ENCODE measurements at regions of chr3 and their contacts with region 1.

Region 1: DNA sequence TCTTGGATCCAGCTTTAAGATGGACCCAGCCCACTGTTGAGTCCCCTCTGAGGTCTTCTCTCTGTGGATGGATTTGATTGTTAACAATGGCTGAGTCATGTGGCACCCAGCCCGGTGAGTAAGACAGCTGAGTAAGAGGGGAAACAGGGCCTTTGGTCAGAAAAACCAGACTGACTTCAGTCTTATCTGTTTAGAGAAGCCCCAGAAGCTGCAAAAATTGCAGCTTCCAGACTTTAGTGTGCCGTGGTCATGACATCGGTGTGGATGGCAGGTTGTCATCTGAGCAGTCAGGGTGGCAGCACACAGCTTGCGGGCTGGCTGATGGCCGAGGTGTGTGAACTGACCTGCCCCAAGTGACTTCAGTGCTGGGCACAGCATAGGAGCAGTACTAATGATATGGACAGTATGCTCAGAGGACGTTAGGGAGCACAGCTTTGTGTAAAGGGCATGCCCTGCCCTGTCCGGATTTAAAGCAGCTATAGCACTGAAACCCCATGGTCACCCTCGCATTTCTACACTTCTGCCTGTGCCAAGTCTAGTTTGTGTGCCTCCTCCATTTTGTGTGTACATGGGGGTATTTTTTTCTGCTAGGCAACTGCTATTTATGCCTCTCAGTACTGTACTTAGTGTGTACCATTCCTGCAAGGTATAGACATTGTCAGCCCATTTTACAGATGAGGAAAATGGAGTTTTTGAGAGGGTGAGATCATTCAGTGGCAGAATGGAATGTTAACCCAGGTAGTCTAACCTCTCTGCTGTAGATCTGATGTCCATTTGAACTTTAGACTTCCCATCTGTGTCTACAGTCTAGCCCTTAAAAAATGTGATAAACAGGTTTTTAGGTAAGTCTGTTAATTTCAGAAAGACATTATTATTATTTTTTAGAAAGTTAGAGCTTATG is 44.4 kb downstream of the FLNB start:
- DNase-seq: peak; percentile 97
- H3K4me3 Mint-ChIP-seq: peak overlapping the region; percentile 68
- H3K27ac Mint-ChIP-seq: peak overlapping the region; percentile 95
- H3K4me1 Mint-ChIP-seq: peaks cover 59% of the 10 kb centered on the region
- H3K27me3 Mint-ChIP-seq: no peaks in the 10 kb centered on the region
- CTCF ChIP-seq: no peak

Region 2: DNA sequence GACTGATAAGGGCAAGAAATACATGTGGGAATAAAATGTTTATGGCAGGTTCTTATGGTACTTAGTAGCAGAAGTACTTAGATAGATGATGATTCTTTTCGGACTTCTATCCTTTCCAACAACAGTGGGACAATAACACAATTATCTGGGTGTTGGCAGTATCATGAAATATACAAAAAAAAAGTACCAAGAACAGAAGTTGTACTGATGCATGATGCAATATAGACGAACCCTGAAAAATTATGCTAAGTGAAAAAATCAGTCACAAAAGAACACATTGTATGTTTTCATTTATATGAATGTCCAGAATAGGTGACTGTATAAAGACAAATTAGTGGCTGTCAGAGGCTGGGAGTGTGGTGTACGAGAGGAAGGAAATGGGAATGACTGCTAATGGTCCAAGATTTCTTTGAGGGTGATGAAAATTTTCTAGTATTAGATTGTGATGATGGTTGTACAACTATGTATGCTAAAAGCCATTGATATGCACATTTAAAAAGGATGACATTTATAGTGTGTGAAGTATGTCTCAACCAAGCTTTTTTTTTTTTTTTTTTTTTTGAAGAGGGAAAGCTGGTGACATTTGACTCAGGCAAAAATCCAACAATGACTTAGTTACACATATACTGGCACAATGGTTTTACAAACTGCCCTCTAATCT is 476.5 kb before region 1 on chr3:
- CTCF ChIA-PET with region 1: no interaction called
- POLR2A ChIA-PET with region 1: no interaction called
- intact Hi-C with region 1: no loop called
- DNase-seq: no peak
- H3K4me3 Mint-ChIP-seq: no peak overlapping the region
- H3K27ac Mint-ChIP-seq: peak overlapping the region; percentile 37
- H3K4me1 Mint-ChIP-seq: peaks cover 6% of the 10 kb centered on the region
- H3K27me3 Mint-ChIP-seq: no peaks in the 10 kb centered on the region
- CTCF ChIP-seq: no peak

Region 3: GRCh38 chr3:58013973-58014649 is 38.5 kb before region 1 on chr3:
- CTCF ChIA-PET with region 1: interaction called, 7 read pairs
- POLR2A ChIA-PET with region 1: interaction called, 98 read pairs
- intact Hi-C with region 1: loop called (anchors 5 kb)
- DNase-seq: no peak
- H3K4me3 Mint-ChIP-seq: no peak overlapping the region
- H3K27ac Mint-ChIP-seq: no peak overlapping the region
- H3K4me1 Mint-ChIP-seq: peaks cover 55% of the 10 kb centered on the region
- H3K27me3 Mint-ChIP-seq: no peaks in the 10 kb centered on the region
- CTCF ChIP-seq: no peak

Region 4: GRCh38 chr3:58041654-58042324 is 10.8 kb before region 1 on chr3:
- CTCF ChIA-PET with region 1: interaction called, 9 read pairs
- POLR2A ChIA-PET with region 1: interaction called, 54 read pairs
- intact Hi-C with region 1: no loop called
- DNase-seq: no peak
- H3K4me3 Mint-ChIP-seq: no peak overlapping the region
- H3K27ac Mint-ChIP-seq: peak overlapping the region; percentile 82
- H3K4me1 Mint-ChIP-seq: peaks cover 54% of the 10 kb centered on the region
- H3K27me3 Mint-ChIP-seq: no peaks in the 10 kb centered on the region
- CTCF ChIP-seq: no peak

Region 5: GRCh38 chr3:58093573-58094195 is 41.1 kb after region 1 on chr3:
- CTCF ChIA-PET with region 1: interaction called, 4 read pairs
- POLR2A ChIA-PET with region 1: interaction called, 22 read pairs
- intact Hi-C with region 1: no loop called
- DNase-seq: peak; percentile 89
- H3K4me3 Mint-ChIP-seq: no peak overlapping the region
- H3K27ac Mint-ChIP-seq: peak overlapping the region; percentile 72
- H3K4me1 Mint-ChIP-seq: peaks cover 21% of the 10 kb centered on the region
- H3K27me3 Mint-ChIP-seq: no peaks in the 10 kb centered on the region
- CTCF ChIP-seq: no peak

Measured in MCF 10A (cell line).